Adrenal gland (tissue), 19 donors: ENCODE measurements at regions of chr9 and their contacts with region 1.

Region 1: DNA sequence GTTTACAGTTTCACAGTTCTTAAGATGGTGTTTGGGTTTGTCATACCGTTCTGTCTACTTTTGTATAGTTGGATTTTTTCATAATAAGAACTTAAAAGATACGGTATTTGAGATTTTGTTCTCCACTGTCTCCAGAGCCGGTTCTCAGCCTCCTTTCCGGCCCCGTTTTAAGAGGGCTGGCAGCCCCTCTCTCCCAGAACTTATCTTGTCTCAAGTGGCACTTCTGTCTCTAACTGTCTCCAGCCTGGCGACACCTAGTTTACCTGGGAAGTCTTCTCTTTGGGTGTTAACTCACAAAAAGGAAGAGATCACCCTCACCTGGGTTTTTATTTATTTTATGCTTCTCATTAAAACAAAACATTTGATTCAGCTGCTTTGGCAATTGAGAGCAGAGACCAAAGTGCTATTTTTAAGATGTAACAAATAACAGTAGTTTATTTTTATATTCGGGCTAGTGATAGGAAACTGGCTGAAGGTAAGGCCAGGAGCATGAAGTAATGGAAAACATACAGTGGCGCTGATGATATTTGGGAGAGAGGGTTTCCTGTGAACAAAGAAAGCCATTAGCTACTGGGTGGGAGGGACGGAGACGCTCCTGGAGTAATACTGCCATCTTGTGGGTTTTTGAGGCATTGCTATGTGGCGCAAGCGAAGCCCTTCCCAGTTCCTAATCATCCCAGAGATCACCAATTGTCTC is 48.3 kb downstream of the ACER2 start:
- DNase-seq: peak; percentile 64 to 89 (median 75)
- H3K4me3 ChIP-seq: peak overlapping the region in 1 of 4 donors; percentile 33
- H3K27ac ChIP-seq: no peak overlapping the region
- H3K4me1 ChIP-seq: peaks cover 5 to 11% of the 10 kb centered on the region in 2 donors
- H3K27me3 ChIP-seq: no peaks in the 10 kb centered on the region
- CTCF ChIP-seq: peak; percentile 89 to 98 (median 97)
- POLR2A ChIP-seq: no peak

Region 2: DNA sequence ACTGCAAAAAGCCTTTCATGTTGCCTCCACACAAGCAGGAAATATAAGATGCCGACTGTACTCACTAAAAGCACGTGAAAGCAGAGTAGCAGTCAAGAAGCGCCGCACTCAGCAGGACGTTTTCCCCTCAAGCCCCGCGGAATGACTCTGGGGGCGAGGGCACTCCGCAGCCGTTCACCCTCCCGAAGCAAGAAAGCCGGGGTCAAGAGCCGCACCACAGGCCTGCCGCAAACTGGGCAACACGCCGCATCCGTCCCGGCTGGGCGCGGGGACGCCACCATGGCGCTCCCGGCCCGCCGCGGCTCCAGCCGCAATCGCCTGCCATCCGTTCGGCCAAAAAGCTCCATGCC is 77.5 kb before region 1 on chr9:
- intact Hi-C with region 1: loop called in 1 of 2 experiments (anchors 10 kb)
- DNase-seq: peak in 6 of 7 donors; percentile 32 to 68 (median 46)
- H3K4me3 ChIP-seq: peak overlapping the region; percentile 31 to 79 (median 47)
- H3K27ac ChIP-seq: peak overlapping the region; percentile 73 to 97 (median 84)
- H3K4me1 ChIP-seq: peaks cover 20 to 32% of the 10 kb centered on the region in 2 donors
- H3K27me3 ChIP-seq: no peaks in the 10 kb centered on the region
- CTCF ChIP-seq: no peak
- POLR2A ChIP-seq: no peak